K562 (cell line): ENCODE measurements at regions of chr6 and their contacts with region 1.

Region 1: DNA sequence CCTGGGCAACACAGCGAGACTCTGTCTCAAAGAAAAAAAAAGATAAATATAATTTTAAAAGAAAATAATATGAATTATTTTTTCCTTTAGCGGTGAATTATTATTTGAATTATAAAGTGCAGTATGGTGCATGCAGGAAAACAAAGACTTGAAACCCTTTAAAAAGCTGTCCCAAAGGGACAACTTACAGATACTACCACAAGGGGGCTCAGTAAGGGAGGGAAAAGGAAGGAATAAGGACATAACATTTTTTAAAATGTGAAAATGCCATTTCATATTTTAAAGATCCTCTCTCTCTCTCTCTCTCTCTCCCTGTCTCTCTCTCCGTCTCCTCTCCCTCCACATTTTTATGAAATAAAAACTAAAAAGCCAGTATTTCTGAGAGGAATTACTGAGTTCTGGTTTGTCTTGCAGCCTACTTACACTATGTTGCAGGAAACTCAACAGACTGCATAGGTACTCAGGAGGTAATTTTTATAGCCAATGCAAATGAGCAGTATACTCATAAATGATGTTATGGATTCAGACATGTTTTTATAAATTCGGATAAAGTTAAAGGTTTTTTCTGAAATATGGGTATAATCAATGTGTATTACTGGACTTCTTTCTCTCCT is 455.0 kb upstream of the GJE1 start:
- DNase-seq: peak in 1 of 4 experiments; percentile 32
- ATAC-seq: peak; percentile 56; the same call in 1 of the 3 replicates
- H3K4me3 ChIP-seq: no peak overlapping the region
- H3K27ac ChIP-seq: no peak overlapping the region
- H3K4me1 ChIP-seq: no peaks in the 10 kb centered on the region
- H3K27me3 ChIP-seq: no peaks in the 10 kb centered on the region
- CTCF ChIP-seq: peak in 2 of 3 experiments; percentile 38 to 44; a peak in 4 of 6 replicates
- EP300 ChIP-seq: no peak
- POLR2A ChIP-seq: no peak
- RAD21 ChIP-seq: peak in 1 of 2 experiments; percentile 78; a peak in 3 of 4 replicates

Region 2: DNA sequence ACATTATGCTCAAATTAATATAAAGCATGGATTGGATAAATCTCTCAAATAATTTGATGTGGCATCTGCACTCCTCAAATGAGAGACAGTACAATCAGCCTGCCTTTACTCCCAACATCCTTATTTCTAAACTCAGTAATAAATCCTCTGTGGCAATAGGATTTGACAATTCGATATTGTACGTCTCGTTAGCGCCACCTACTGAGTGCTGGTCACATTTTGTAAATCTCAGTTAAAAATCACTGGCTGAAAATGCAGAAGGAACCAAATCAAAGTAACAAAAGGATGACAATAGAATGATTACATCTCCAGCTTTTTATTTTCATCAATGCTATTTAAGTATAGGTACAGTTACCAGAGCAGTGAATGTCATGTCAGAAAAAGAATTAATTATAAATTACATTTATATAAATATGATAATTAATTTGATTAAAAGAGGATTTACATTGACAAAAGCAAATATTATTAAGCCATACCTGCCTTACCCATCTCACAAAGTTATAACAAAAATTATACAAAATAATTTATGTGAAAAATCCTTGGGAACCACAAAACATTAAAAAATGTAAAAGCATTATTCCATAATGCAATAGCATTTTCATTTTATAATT is 434.9 kb after region 1 on chr6:
- CTCF ChIA-PET with region 1: no interaction called
- POLR2A ChIA-PET with region 1: no interaction called
- in situ Hi-C with region 1: loop called (anchors 25 kb)
- intact Hi-C with region 1: loop called (anchors 5 kb)
- DNase-seq: peak; percentile 23 to 82 (median 49)
- ATAC-seq: peak; percentile 65
- H3K4me3 ChIP-seq: no peak overlapping the region
- H3K27ac ChIP-seq: no peak overlapping the region
- H3K4me1 ChIP-seq: no peaks in the 10 kb centered on the region
- H3K27me3 ChIP-seq: no peaks in the 10 kb centered on the region
- CTCF ChIP-seq: peak; percentile 56 to 85 (median 78); a peak in 5 of 6 replicates
- EP300 ChIP-seq: no peak
- POLR2A ChIP-seq: no peak
- RAD21 ChIP-seq: peak; percentile 85 to 92